OCI-LY7 (cell line): ENCODE measurements at regions of chr11 and their contacts with region 1.

Region 1: GRCh38 chr11:126440792-126441514 is 85.5 kb downstream of the ST3GAL4 start:
- DNase-seq: peak; percentile 75
- H3K4me3 ChIP-seq: no peak overlapping the region
- H3K27ac ChIP-seq: no peak overlapping the region
- H3K4me1 ChIP-seq: peaks cover 32% of the 10 kb centered on the region
- CTCF ChIP-seq: peak; percentile 95

Region 2: DNA sequence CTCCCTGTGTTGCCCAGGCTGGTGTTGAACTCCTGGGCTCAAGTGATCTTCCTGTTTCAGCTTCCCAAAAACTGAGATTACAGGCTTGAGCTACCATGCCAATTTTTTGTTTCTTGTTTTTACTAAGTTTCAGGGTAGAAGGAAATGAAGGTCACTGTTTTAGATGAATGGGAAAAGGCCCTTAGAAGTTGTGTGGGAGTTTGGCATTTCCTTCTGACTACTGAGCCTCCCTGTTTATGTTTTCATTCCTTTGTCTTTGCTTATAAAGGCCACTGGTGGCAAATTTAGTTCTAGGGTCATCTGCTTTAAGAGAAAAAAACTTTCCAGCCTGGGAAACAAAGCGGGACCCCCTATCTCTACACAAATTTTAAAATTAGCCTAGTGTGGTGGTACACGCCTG is 194.3 kb before region 1 on chr11:
- CTCF ChIA-PET with region 1: no interaction called
- POLR2A ChIA-PET with region 1: no interaction called
- intact Hi-C with region 1: no loop called
- DNase-seq: no peak
- H3K4me3 ChIP-seq: no peak overlapping the region
- H3K27ac ChIP-seq: no peak overlapping the region
- H3K4me1 ChIP-seq: no peaks in the 10 kb centered on the region
- CTCF ChIP-seq: no peak

Region 3: GRCh38 chr11:126310228-126310991 is 130.5 kb before region 1 on chr11:
- CTCF ChIA-PET with region 1: interaction called, 3 read pairs
- POLR2A ChIA-PET with region 1: no interaction called
- intact Hi-C with region 1: loop called (anchors 1 kb)
- DNase-seq: peak; percentile 66
- H3K4me3 ChIP-seq: no peak overlapping the region
- H3K27ac ChIP-seq: no peak overlapping the region
- H3K4me1 ChIP-seq: peaks cover 9% of the 10 kb centered on the region
- CTCF ChIP-seq: peak; percentile 95

Region 4: GRCh38 chr11:126480410-126481302 is 39.7 kb after region 1 on chr11:
- CTCF ChIA-PET with region 1: interaction called, 59 read pairs
- POLR2A ChIA-PET with region 1: interaction called, 18 read pairs
- intact Hi-C with region 1: loop called (anchors 1 kb)
- DNase-seq: peak; percentile 90
- H3K4me3 ChIP-seq: peak overlapping the region; percentile 39
- H3K27ac ChIP-seq: peak overlapping the region; percentile 44
- H3K4me1 ChIP-seq: peaks cover 33% of the 10 kb centered on the region
- CTCF ChIP-seq: peak; percentile 97

Region 5: GRCh38 chr11:126607374-126607773 is 166.4 kb after region 1 on chr11:
- CTCF ChIA-PET with region 1: no interaction called
- POLR2A ChIA-PET with region 1: no interaction called
- intact Hi-C with region 1: loop called (anchors 10 kb)
- DNase-seq: peak; percentile 5
- H3K4me3 ChIP-seq: no peak overlapping the region
- H3K27ac ChIP-seq: no peak overlapping the region
- H3K4me1 ChIP-seq: no peaks in the 10 kb centered on the region
- CTCF ChIP-seq: peak; percentile 57

Region 6: DNA sequence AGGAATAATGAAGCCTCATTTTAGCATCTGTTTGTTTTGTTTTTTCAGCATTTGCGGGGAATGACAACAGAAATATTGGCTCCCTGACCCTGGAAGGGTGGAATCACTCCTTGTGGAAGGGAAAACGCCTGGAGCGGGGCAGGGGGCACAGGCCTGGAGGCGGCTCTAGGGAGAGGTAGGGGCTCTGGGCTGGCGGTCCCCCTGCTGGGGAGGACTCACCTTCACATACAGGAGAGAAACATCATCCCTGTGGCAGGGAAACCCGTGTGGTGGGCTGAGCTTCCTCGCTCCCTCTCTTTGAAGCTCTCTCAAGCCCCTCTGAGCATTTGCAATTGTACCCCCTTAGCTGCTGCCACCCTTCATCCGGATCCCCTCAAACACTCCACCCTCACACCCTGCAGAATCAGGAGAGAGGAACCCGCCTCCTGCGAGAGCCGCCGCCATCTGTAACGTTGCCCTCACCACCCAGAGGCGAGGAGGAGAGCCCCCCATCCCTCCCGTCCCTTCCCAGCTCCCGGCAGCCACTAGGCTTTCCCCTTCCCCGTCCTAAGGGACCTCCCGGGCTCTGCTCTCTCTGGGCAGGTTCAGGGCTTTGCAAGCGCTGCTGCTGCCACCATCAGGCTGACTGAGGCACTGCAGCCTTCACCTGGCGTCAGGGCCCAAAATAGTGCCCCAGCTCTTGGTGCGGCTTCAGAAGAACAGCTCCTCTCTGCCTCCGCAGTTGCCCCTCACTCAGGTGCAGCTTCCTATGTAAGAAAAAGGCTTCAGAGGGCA is 549.2 kb after region 1 on chr11:
- CTCF ChIA-PET with region 1: no interaction called
- POLR2A ChIA-PET with region 1: no interaction called
- intact Hi-C with region 1: loop called (anchors 1 kb)
- DNase-seq: peak; percentile 57
- H3K4me3 ChIP-seq: no peak overlapping the region
- H3K27ac ChIP-seq: no peak overlapping the region
- H3K4me1 ChIP-seq: no peaks in the 10 kb centered on the region
- CTCF ChIP-seq: peak; percentile 84

Region 7: DNA sequence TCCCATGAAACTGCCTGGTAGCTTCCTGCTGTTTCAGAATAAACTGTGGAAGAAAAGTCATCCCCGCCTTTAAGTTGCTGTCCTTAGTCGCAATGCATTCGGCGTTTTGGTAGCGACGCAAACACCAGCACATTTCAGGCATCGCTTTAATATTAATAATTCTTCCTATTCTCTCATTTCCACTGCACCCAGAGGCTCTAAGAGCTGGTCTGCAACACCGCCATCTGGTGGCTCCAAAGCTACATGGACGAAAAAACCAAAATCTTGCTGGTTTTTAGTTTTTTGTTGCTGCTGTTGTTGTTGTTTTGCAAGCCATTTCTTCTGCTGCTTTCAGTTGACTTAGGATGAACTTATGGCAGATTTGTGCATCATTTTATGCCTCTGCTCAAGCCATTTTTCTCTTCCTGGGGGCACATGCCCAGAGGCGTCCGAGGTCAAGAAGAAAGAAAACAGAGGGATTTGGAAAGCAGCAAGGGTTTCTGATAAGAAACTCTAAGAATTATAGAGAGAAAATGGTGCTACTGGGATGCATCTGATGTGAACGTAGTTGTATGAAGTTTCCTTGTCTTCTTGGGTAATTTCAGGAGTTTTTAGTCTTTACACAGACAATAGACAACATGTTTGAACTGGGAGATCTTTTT is 905.0 kb after region 1 on chr11:
- CTCF ChIA-PET with region 1: no interaction called
- POLR2A ChIA-PET with region 1: no interaction called
- intact Hi-C with region 1: loop called (anchors 2 kb)
- DNase-seq: peak; percentile 35
- H3K4me3 ChIP-seq: no peak overlapping the region
- H3K27ac ChIP-seq: no peak overlapping the region
- H3K4me1 ChIP-seq: no peaks in the 10 kb centered on the region
- CTCF ChIP-seq: peak; percentile 88